Tibial artery (tissue), 4 donors: ENCODE measurements at regions of chr22 and their contacts with region 1.

Region 1: DNA sequence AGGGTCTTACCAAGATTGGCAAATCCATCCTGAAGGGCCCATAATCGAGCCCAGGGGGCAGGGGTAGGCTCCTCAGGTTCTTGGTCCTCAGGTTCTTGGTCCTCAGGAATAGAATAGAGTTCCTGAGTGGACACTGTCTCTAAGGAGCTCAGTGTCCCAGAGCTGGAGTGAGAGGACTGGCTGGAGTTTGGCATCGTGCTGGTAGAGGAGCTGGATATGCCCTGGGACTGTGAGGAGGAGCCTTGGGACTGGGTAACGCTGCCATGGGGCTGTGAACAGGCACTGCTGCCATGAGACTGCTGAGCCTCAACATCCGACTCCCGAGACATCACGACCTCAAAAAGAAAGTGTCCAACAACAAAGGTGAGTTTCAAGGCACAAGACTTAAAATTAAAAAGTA is 7.2 kb downstream of the CHEK2 start:
- DNase-seq: no peak
- H3K4me3 ChIP-seq: no peak overlapping the region
- H3K27ac ChIP-seq: no peak overlapping the region
- H3K4me1 ChIP-seq: no peaks in the 10 kb centered on the region
- H3K27me3 ChIP-seq: no peaks in the 10 kb centered on the region
- CTCF ChIP-seq: no peak

Region 2: GRCh38 chr22:28629420-28630176 is 104.8 kb before region 1 on chr22:
- intact Hi-C with region 1: no loop called
- DNase-seq: no peak
- H3K4me3 ChIP-seq: no peak overlapping the region
- H3K27ac ChIP-seq: no peak overlapping the region
- H3K4me1 ChIP-seq: no peaks in the 10 kb centered on the region
- H3K27me3 ChIP-seq: no peaks in the 10 kb centered on the region
- CTCF ChIP-seq: no peak

Region 3: DNA sequence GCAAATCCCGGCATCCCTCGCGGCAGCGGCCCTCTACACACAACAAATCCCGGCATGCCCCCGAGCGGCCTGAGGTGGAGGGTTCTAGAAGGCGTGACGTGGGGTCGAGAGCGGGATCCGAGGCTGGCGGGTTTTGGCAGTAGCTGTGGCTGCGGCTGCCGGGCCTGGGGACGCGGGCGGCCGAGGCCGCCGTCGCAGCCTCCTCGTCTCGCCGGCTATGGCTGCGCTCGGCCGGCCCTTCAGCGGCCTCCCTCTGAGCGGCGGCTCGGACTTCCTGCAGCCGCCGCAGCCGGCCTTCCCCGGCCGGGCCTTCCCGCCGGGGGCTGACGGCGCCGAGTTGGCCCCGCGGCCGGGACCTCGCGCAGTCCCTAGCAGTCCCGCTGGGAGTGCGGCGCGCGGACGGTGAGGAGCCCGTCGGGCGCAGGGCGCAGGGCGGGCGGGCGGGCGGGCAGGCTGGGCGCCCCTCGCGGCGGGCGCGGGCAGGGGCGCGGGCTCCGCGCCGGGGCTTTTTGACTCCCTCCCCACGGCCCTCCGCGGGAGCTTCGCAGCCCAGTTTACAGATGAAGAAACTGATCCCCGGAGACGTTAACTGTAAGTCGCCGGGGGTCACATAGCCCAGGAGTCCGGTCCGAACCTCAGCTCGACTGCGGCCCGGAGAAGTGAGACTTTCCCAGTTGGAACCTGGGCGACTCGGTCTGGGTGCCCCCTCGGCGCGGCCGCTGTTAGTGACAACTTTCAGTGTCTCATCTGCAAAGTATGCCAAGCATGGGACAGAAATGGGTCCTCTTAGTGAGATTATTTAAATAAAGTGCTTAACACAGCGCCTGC is 38.5 kb after region 1 on chr22 and contains the start of gene CCDC117:
- intact Hi-C with region 1: no loop called
- DNase-seq: peak; percentile 97 to 98
- H3K4me3 ChIP-seq: peak within 1 kb of the TSS; percentile 88 to 94
- H3K27ac ChIP-seq: peak within 1 kb of the TSS; percentile 96 to 99
- H3K4me1 ChIP-seq: peaks cover 0 to 34% (median 21%) of the 10 kb centered on the region in 4 donors
- H3K27me3 ChIP-seq: no peaks in the 10 kb centered on the region
- CTCF ChIP-seq: peak in 1 of 2 experiments; percentile 55

Region 4: DNA sequence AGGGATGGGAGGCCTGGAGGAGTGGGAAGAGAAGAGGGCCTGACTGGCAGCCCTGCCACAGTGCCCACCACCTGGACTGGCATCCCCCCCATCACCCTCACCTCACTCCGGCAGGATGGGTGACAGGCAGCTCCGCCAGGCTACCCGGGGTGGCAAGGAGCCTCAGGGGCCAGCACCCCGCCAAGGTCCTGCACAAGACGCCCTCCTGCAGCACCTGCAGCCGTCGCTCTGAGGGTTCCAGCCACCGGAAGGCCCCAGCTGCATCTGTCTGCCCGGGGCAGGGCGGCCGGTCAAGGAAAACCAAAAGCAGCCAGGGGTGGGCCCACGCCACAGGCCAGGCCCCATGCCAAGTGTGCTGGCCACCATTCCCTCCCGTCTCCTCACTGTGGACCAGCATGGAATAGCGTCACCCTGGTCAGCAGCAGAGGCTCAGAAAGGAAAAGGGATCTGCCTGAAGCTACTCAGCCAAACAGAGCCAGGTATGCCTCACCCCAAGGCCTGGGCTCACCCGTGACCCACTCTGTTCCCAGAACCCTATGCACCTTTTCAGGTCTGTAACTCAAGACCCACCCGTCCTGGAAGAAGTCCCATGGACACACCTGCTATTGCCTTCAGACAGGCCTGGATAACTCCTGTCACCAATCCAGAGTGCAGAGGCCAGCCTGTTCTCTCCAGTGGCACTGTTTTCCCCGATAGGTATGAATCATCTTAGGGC is 526.4 kb after region 1 on chr22:
- intact Hi-C with region 1: loop called (anchors 5 kb)
- DNase-seq: peak in 1 of 2 donors; percentile 55
- H3K4me3 ChIP-seq: no peak overlapping the region
- H3K27ac ChIP-seq: no peak overlapping the region
- H3K4me1 ChIP-seq: peaks cover 0 to 4% (median 0%) of the 10 kb centered on the region in 4 donors
- H3K27me3 ChIP-seq: no peaks in the 10 kb centered on the region
- CTCF ChIP-seq: no peak